Caco-2 (cell line): ENCODE measurements at regions of chr7 and their contacts with region 1.

Region 1: DNA sequence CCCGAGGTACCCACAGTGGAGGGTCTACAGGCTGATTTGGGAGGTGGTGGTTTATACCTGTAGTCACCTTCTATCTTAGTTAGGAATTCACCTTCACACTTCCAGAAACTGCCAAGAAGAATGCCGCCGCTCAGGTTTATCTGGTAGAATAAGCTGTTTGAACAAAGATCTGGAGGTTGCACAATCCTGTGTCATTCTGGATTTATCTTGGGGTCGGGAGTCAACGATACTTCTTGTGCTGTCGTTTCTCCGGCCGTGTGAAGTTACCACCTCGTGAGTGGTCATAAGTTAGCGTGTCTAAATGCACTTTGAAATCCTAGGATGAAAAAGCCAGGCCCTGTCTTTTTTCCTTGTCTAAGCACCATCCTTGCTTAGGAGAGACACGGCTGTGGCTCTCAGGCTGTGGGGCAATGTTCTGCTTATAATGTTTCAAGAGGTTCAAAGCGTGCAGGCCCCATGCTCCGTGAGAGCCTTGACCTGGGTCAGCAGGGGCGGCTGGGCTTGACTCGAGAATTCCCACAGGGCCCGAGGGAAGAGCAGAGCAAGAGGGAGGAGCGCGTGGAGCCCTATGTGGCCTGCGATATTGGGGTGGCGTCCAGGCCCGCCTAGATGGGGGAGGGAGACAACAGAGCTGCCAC is 35.5 kb downstream of the GRIFIN start:
- DNase-seq: peak; percentile 92 to 93
- H3K4me3 ChIP-seq: no peak overlapping the region
- H3K4me3 Mint-ChIP-seq: peak overlapping the region; percentile 65
- H3K27ac Mint-ChIP-seq: peak overlapping the region; percentile 95
- H3K4me1 ChIP-seq: peaks cover 53% of the 10 kb centered on the region
- H3K4me1 Mint-ChIP-seq: peaks cover 50% of the 10 kb centered on the region
- H3K27me3 ChIP-seq: no peaks in the 10 kb centered on the region
- H3K27me3 Mint-ChIP-seq: no peaks in the 10 kb centered on the region
- CTCF ChIP-seq: no peak

Region 2: GRCh38 chr7:2403014-2403717 is 37.6 kb before region 1 on chr7 and contains the start of gene CHST12:
- CTCF ChIA-PET with region 1: interaction called, 5 read pairs
- POLR2A ChIA-PET with region 1: interaction called, 3 read pairs
- intact Hi-C with region 1: loop called (anchors 2 kb)
- DNase-seq: peak; percentile 95 to 97
- H3K4me3 ChIP-seq: peak within 1 kb of the TSS; percentile 79
- H3K4me3 Mint-ChIP-seq: peak within 1 kb of the TSS; percentile 76
- H3K27ac Mint-ChIP-seq: no peak within 1 kb of the TSS
- H3K4me1 ChIP-seq: peaks cover 6% of the 10 kb centered on the region; the same call in 1 of the 2 replicates
- H3K4me1 Mint-ChIP-seq: peaks cover 18% of the 10 kb centered on the region
- H3K27me3 ChIP-seq: no peaks in the 10 kb centered on the region
- H3K27me3 Mint-ChIP-seq: no peaks in the 10 kb centered on the region
- CTCF ChIP-seq: no peak
- total RNA-seq, gene CHST12: 26.0 and 28.0 TPM in 2 replicates

Region 3: DNA sequence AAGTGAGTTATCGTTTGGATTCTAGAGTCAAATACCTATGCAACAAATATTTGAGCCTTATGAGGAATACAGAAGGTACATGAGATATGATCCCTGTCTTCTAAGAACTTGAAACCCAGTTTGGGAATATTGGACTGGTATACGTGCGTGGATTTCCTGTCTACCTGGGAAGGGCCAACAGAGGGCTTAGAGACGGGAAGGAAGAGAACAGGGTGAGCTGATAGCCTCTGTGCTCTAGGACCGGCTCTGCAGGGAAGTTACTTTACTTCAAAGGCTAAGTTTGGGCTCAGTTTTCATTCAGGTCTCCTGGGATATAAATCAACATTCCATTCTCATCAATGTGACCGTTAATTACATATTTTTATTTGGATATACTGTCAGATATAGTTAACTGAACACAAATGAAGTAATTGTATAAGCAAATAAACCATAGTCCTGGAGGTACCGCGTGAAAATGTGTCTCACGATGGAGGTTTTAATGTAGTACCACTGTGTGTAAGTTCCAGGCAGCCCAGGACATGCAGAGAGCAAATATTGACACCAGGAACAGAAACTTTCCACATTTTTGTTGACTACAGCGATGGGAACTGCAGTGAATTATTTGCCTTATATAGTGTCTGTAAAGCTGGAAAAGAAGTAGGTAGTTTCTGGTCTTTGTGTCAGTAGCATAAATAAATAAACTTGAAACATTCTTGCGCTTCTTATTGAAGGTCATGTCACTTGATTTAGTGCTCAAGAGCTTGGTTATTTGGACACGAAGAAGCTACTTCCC is 28.7 kb before region 1 on chr7:
- CTCF ChIA-PET with region 1: interaction called, 5 read pairs
- POLR2A ChIA-PET with region 1: interaction called, 3 read pairs
- intact Hi-C with region 1: loop called (anchors 1 kb)
- DNase-seq: peak; percentile 60 to 65
- H3K4me3 ChIP-seq: no peak overlapping the region
- H3K4me3 Mint-ChIP-seq: peak overlapping the region; percentile 43
- H3K27ac Mint-ChIP-seq: peak overlapping the region; percentile 83
- H3K4me1 ChIP-seq: peaks cover 30% of the 10 kb centered on the region
- H3K4me1 Mint-ChIP-seq: peaks cover 50% of the 10 kb centered on the region
- H3K27me3 ChIP-seq: no peaks in the 10 kb centered on the region
- H3K27me3 Mint-ChIP-seq: no peaks in the 10 kb centered on the region
- CTCF ChIP-seq: no peak

Region 4: GRCh38 chr7:2851497-2851896 is 410.8 kb after region 1 on chr7:
- CTCF ChIA-PET with region 1: no interaction called
- POLR2A ChIA-PET with region 1: no interaction called
- intact Hi-C with region 1: no loop called
- DNase-seq: no peak
- H3K4me3 ChIP-seq: no peak overlapping the region
- H3K4me3 Mint-ChIP-seq: no peak overlapping the region
- H3K27ac Mint-ChIP-seq: no peak overlapping the region
- H3K4me1 ChIP-seq: no peaks in the 10 kb centered on the region
- H3K4me1 Mint-ChIP-seq: peaks cover 4% of the 10 kb centered on the region
- H3K27me3 ChIP-seq: no peaks in the 10 kb centered on the region
- H3K27me3 Mint-ChIP-seq: no peaks in the 10 kb centered on the region
- CTCF ChIP-seq: no peak